ENCODE measurements at regions of chr9 and their contacts with region 1.

Region 1: GRCh38 chr9:137445275-137445807 is 4.2 kb upstream of the ENTPD8 start:
- DNase-seq: peak; percentile 87
- H3K27ac ChIP-seq: peak overlapping the region; percentile 40
- CTCF ChIP-seq: peak; percentile 99

Region 2: DNA sequence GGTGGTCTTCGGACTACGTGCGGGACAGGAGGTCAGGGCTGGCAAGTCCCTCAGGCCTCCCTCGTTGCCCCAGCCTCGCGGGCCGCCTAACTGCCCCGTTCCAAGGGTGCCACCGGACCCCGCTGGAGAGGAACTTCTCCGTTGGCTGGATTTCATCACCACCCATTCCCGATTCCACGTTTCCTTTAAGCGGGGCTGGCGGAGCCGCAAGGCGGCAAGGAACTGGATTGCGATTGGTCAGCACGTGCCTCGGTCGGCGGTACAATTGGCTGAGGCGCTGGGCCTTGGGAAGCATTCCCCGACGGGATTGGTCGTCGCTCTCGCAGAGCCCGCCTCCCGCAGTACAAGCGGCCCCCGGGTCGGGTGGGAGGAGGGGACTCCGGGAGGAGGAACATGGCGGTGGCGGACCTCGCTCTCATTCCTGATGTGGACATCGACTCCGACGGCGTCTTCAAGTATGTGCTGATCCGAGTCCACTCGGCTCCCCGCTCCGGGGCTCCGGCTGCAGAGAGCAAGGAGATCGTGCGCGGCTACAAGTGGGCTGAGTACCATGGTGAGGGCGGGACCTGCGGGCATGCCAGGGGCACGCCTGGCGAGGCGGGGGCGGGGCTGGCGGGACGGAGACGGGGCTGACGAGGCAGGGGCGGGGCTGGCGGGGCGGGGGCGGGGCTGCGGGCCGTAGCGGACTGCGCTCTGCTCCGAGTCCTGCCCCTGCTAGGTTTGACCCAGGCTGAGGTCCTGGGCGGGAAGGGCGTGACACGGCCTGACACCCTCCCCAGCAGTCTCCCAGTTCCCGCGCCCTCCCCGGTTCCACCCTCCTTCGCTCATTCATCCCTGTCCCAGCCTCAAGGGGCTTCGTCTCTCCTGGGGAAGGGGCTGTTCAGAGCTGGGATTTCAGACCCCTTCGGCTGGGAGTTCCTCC is 596.0 kb before region 1 on chr9 and contains the start of gene PHPT1:
- CTCF ChIA-PET with region 1: no interaction called
- POLR2A ChIA-PET with region 1: no interaction called
- DNase-seq: peak; percentile 100
- H3K27ac ChIP-seq: peak within 1 kb of the TSS; percentile 98
- CTCF ChIP-seq: no peak

Region 3: DNA sequence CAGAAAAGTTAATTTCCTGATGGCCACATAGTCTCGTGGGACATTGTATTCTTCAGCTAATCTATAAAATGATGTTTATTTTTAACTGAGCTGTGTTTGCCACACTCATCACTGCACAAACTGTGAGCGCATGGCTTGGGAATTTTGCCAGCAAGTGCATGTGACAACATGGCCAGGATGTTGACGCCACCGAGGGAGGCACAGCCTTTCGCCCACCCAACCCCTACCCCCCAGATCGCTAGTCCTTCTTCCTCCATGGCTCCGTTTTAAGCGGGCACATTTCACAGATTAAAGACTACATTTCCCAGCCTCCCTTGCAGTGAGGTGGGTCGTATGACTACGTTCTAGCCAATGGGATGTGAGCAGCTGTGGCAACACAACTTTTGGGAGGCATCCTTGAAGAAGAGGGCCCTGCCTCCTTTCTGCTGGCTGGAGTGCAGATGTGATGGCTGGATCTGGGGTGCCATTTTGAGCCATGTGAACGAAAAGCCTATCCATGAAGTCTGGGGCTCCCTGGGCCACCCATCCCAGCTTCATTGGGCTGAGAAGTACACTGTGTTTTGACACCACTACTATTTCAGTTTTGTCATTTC is 151.2 kb before region 1 on chr9:
- CTCF ChIA-PET with region 1: interaction called, 12 read pairs
- POLR2A ChIA-PET with region 1: no interaction called
- DNase-seq: no peak
- H3K27ac ChIP-seq: no peak overlapping the region
- CTCF ChIP-seq: no peak

Region 4: GRCh38 chr9:137416006-137416562 is 29.3 kb before region 1 on chr9:
- CTCF ChIA-PET with region 1: no interaction called
- POLR2A ChIA-PET with region 1: no interaction called
- DNase-seq: no peak
- H3K27ac ChIP-seq: peak overlapping the region; percentile 93
- CTCF ChIP-seq: no peak

Region 5: GRCh38 chr9:137470785-137471184 is 25.4 kb after region 1 on chr9:
- CTCF ChIA-PET with region 1: no interaction called
- POLR2A ChIA-PET with region 1: no interaction called
- DNase-seq: no peak
- H3K27ac ChIP-seq: no peak overlapping the region
- CTCF ChIP-seq: no peak

Measured in RWPE1 (cell line).